ENCODE measurements at regions of chr1 and their contacts with region 1.

Region 1: GRCh38 chr1:157138220-157139051 is at the start of gene ETV3:
- DNase-seq: peak; percentile 94
- H3K4me3 Mint-ChIP-seq: peak within 1 kb of the TSS; percentile 98
- H3K27ac Mint-ChIP-seq: peak within 1 kb of the TSS; percentile 88
- H3K4me1 Mint-ChIP-seq: peaks cover 73% of the 10 kb centered on the region
- H3K27me3 Mint-ChIP-seq: no peaks in the 10 kb centered on the region
- total RNA-seq, gene ETV3: 30.9 to 32.4 TPM

Region 2: GRCh38 chr1:157105988-157106812 is 32.2 kb before region 1 on chr1:
- CTCF ChIA-PET with region 1: no interaction called
- POLR2A ChIA-PET with region 1: no interaction called
- intact Hi-C with region 1: loop called (anchors 5 kb)
- DNase-seq: peak; percentile 73
- H3K4me3 Mint-ChIP-seq: no peak overlapping the region
- H3K27ac Mint-ChIP-seq: no peak overlapping the region
- H3K4me1 Mint-ChIP-seq: peaks cover 11% of the 10 kb centered on the region
- H3K27me3 Mint-ChIP-seq: peaks cover 26% of the 10 kb centered on the region

Region 3: GRCh38 chr1:157156058-157156541 is 17.7 kb after region 1 on chr1:
- CTCF ChIA-PET with region 1: interaction called, 60 read pairs
- POLR2A ChIA-PET with region 1: interaction called, 6 read pairs
- intact Hi-C with region 1: loop called (anchors 2 kb)
- DNase-seq: peak; percentile 83
- H3K4me3 Mint-ChIP-seq: no peak overlapping the region
- H3K27ac Mint-ChIP-seq: no peak overlapping the region
- H3K4me1 Mint-ChIP-seq: peaks cover 16% of the 10 kb centered on the region
- H3K27me3 Mint-ChIP-seq: peaks cover 11% of the 10 kb centered on the region

Region 4: GRCh38 chr1:157252473-157252872 is 114.0 kb after region 1 on chr1:
- CTCF ChIA-PET with region 1: no interaction called
- POLR2A ChIA-PET with region 1: no interaction called
- intact Hi-C with region 1: no loop called
- DNase-seq: no peak
- H3K4me3 Mint-ChIP-seq: no peak overlapping the region
- H3K27ac Mint-ChIP-seq: no peak overlapping the region
- H3K4me1 Mint-ChIP-seq: no peaks in the 10 kb centered on the region
- H3K27me3 Mint-ChIP-seq: peaks cover 41% of the 10 kb centered on the region

Measured in activated CD4-positive, alpha-beta memory T cell treated with anti-CD3 and anti-CD28 coated beads for 36 hours (primary cell).